ENCODE measurements at regions of chr17 and their contacts with region 1.

Region 1: DNA sequence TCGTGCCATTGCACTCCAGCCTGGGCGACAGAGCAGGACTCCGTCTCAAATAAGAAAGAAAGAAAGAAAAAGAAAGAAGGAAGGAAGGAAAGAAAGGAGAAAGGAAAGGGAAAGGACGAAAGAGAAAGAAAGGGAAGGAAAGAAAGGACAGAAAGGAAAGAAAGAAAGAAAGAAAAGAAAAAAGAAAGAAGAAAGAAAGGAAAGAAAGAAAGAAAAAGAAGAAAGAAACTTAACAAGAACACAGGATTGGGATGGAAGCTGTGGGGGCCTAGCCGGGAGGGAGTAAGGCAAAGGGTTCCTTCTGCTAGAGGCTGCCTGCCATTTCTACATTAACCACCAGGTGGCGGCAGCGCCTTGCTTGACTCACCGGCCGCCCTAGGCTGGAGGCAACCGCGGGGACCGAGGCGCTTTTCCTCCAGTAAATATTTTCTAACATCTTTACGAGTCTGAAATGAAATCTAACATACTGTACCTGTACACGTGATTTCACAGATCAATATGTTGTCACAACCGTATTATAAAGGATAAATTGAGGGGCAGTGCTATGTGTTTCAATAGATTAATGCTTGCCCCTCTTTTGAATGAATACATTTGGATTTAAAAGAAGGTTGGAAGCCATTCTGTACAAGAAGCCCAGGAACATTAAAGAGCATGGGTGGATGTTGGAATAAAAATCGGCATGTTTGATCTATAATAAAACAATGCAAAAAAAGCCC is 6.1 kb downstream of the GJD3 start:
- H3K4me3 Mint-ChIP-seq: peak overlapping the region; percentile 48
- H3K27ac Mint-ChIP-seq: peak overlapping the region; percentile 7
- H3K4me1 Mint-ChIP-seq: peaks cover 43% of the 10 kb centered on the region
- H3K27me3 Mint-ChIP-seq: peaks cover 29% of the 10 kb centered on the region

Region 2: DNA sequence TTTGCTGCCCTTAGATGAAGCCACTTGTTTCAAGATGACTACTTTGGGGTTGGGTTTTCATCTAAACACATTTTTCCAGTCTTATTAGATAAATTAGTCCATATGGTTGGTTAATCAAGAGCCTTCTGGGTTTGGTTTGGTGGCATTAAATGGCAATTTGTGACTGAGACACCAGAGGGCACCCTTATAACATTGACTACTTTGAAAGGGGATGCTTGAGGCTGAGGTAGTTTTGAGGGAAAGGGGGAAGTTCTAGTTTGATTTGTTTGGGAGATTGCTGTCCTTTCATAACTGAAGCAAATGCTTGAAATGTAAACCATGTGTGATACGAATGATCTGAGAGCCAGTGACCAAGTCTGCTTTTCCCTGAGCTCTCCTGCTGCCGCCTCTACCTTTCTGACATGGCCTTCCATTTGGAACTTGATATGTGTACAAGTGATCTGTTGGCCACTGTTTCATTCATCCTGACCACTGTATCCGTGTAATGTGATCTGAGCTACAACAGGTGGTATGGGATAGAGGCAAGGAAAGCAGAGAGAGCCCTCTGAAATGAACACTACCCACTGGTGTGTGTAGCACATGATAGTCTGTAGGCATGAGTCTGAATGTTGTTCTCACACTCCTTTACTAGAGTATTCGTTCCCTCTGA is 55.3 kb before region 1 on chr17:
- intact Hi-C with region 1: loop called (anchors 1 kb)
- H3K4me3 Mint-ChIP-seq: no peak overlapping the region
- H3K27ac Mint-ChIP-seq: no peak overlapping the region
- H3K4me1 Mint-ChIP-seq: peaks cover 17% of the 10 kb centered on the region
- H3K27me3 Mint-ChIP-seq: no peaks in the 10 kb centered on the region

Region 3: GRCh38 chr17:40317880-40318829 is 40.3 kb before region 1 on chr17:
- intact Hi-C with region 1: no loop called
- H3K4me3 Mint-ChIP-seq: peak overlapping the region; percentile 94
- H3K27ac Mint-ChIP-seq: peak overlapping the region; percentile 96
- H3K4me1 Mint-ChIP-seq: peaks cover 89% of the 10 kb centered on the region
- H3K27me3 Mint-ChIP-seq: peaks cover 2% of the 10 kb centered on the region

Region 4: GRCh38 chr17:40417609-40418427 is 59.3 kb after region 1 on chr17 and contains the start of gene TOP2A:
- intact Hi-C with region 1: loop called (anchors 1 kb)
- H3K4me3 Mint-ChIP-seq: peak within 1 kb of the TSS; percentile 97
- H3K27ac Mint-ChIP-seq: peak within 1 kb of the TSS; percentile 73
- H3K4me1 Mint-ChIP-seq: peaks cover 20% of the 10 kb centered on the region
- H3K27me3 Mint-ChIP-seq: no peaks in the 10 kb centered on the region

Region 5: DNA sequence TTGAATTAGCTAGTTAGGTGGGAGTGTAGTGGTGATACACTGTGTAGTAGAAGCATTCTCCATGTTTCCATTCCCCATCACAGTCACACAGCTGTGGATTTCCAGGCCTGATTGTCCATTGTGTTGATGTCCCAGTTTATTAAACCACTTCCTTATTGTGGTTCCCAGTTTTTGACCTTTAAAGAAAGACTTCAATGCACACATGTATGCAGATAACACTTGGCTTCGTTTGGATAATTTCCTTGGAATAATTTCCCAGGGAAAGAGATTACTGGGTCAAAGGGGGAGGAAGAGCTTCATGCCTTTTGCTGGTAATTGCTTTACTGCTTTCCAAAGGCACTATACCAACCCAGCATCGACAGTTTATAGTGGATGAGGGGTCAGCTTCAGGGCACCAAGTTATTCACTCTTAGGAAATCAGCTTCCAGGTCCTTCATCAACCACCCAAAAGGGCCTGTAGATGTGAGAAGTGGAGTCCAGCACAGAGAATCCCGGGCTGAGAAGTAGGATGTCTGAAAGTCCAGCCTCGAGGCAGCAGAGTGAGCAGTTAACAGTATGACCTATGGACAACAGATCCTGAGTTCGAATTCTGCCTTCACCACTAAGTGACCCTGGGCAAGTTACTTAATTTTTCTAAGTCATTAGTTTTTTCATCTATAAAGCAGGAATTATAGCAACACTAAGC is 174.2 kb after region 1 on chr17:
- intact Hi-C with region 1: loop called (anchors 1 kb)
- H3K4me3 Mint-ChIP-seq: no peak overlapping the region
- H3K27ac Mint-ChIP-seq: no peak overlapping the region
- H3K4me1 Mint-ChIP-seq: peaks cover 22% of the 10 kb centered on the region
- H3K27me3 Mint-ChIP-seq: peaks cover 40% of the 10 kb centered on the region

Measured in dendritic cell treated with granulocyte-macrophage colony-stimulating factor and Interleukin-4, amounts not matched to agents 40 ng/mL and 50 ng/mL, for 4 days (primary cell).